Calu3 (cell line): ENCODE measurements at regions of chr13 and their contacts with region 1.

Region 1: GRCh38 chr13:73074036-73074435 is 15.2 kb downstream of the KLF5 start:
- DNase-seq: no peak
- H3K4me3 Mint-ChIP-seq: peak overlapping the region; percentile 55
- H3K27ac Mint-ChIP-seq: peak overlapping the region; percentile 93
- H3K4me1 Mint-ChIP-seq: no peaks in the 10 kb centered on the region
- H3K27me3 Mint-ChIP-seq: no peaks in the 10 kb centered on the region
- CTCF ChIP-seq: no peak

Region 2: GRCh38 chr13:73107481-73107880 is 33.4 kb after region 1 on chr13:
- CTCF ChIA-PET with region 1: interaction called, 3 read pairs
- intact Hi-C with region 1: loop called (anchors 5 kb)
- DNase-seq: no peak
- H3K4me3 Mint-ChIP-seq: peak overlapping the region; percentile 30
- H3K27ac Mint-ChIP-seq: peak overlapping the region; percentile 90
- H3K4me1 Mint-ChIP-seq: peaks cover 21% of the 10 kb centered on the region
- H3K27me3 Mint-ChIP-seq: no peaks in the 10 kb centered on the region
- CTCF ChIP-seq: no peak

Region 3: GRCh38 chr13:73198991-73199411 is 125.0 kb after region 1 on chr13:
- CTCF ChIA-PET with region 1: no interaction called
- intact Hi-C with region 1: loop called (anchors 10 kb)
- DNase-seq: no peak
- H3K4me3 Mint-ChIP-seq: no peak overlapping the region
- H3K27ac Mint-ChIP-seq: peak overlapping the region; percentile 84
- H3K4me1 Mint-ChIP-seq: peaks cover 11% of the 10 kb centered on the region
- H3K27me3 Mint-ChIP-seq: no peaks in the 10 kb centered on the region
- CTCF ChIP-seq: no peak

Region 4: DNA sequence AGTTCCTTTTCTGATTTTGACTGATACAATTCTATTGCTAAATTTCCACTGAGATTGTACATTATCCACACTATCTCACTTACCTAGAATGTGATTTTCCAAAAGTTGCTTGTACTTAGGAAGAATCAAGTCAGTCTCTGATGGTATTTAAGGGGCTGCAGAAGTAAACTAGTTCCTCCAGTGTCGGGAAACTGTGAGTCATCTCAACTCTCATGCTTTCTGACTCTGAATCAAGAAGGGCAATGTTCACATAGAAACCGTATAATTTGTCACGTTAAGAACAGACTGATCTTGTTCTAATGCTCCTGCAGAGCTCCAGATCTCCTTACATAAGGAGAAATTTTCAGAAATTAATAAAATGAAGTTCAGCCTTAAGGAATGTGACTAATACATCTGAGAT is 354.1 kb after region 1 on chr13:
- CTCF ChIA-PET with region 1: interaction called, 3 read pairs
- intact Hi-C with region 1: loop called (anchors 10 kb)
- DNase-seq: peak; percentile 16
- H3K4me3 Mint-ChIP-seq: no peak overlapping the region
- H3K27ac Mint-ChIP-seq: peak overlapping the region; percentile 90
- H3K4me1 Mint-ChIP-seq: peaks cover 33% of the 10 kb centered on the region
- H3K27me3 Mint-ChIP-seq: no peaks in the 10 kb centered on the region
- CTCF ChIP-seq: no peak